Natural killer cell (primary cell): ENCODE measurements at regions of chr12 and their contacts with region 1.

Region 1: DNA sequence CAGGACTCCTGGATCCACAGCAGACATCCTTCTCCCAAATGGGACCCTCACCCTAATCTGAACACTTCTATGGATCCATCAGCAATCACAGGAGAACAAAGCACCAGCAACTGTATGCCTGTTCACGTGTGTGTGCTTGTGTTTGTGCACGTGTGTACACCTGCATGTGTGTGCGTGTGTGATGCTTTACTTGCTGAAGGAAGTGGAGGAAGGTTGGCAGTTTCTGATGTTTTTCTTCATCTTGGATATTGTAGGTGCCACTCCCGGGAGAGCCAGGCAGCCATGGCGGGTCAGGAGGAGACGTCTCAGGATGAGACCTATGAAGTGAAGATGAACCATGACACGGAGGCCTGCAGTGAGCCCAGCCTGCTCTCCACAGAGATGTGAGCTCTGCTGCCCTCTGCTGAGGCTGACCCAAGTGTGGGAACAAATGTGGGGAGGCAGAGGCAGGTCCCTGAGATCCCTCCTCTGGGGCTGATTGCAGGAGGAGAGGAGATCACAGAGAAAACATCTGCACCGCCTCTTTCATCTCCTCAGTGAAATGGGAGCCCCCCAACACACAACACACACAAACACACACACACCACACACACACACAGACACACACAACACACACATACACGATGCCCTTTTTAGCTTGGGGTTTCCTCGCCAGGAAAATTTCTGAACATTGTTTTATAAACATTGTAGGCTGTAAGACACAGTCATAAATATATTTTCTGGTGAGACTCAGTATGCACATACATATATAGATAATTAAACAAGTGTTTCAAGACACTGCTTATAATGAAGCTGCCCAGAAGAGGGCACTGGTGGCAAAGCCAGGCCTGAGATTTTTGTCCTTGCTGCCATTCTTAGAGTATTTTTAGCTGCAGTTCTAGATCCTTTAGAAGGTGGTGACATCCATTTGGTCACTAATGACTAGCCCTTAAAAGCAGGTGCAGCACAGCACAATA is 112.2 kb upstream of the FKBP4 start:
- DNase-seq: peak; percentile 33 to 74
- ATAC-seq: peak; percentile 61 to 84 (median 78)
- H3K4me3 ChIP-seq: no peak overlapping the region
- H3K4me3 Mint-ChIP-seq: no peak overlapping the region
- H3K27ac ChIP-seq: no peak overlapping the region
- H3K27ac Mint-ChIP-seq: peak overlapping the region; percentile 84 to 85
- H3K4me1 ChIP-seq: no peaks in the 10 kb centered on the region
- H3K4me1 Mint-ChIP-seq: peaks cover 10 to 11% of the 10 kb centered on the region in 2 donors
- H3K27me3 ChIP-seq: no peaks in the 10 kb centered on the region
- H3K27me3 Mint-ChIP-seq: no peaks in the 10 kb centered on the region
- CTCF ChIP-seq: peak; percentile 72

Region 2: DNA sequence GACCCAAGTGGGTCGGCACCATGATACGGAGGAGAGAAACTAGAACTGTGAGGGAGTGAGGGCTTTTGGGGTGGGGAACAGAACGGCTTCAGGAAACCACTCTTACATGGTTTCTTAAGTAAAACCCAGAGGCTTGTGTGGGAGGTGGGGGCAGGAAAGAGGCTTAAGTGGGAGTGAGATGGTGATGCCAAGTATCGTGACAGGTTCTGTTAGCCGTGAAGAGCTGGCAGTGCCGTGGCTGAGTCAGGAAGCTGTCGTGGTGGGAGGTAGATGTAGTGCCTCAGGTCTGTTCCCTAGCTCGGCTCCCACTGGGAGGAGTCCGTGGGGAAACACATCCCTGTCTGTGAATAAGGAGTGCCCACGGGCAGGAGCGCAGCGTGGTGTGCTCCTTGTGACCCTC is 73.6 kb before region 1 on chr12:
- intact Hi-C with region 1: no loop called
- DNase-seq: no peak
- ATAC-seq: no peak
- H3K4me3 ChIP-seq: no peak overlapping the region
- H3K4me3 Mint-ChIP-seq: no peak overlapping the region
- H3K27ac ChIP-seq: no peak overlapping the region
- H3K27ac Mint-ChIP-seq: no peak overlapping the region
- H3K4me1 ChIP-seq: no peaks in the 10 kb centered on the region
- H3K4me1 Mint-ChIP-seq: peaks cover 0 to 9% of the 10 kb centered on the region in 2 donors
- H3K27me3 ChIP-seq: no peaks in the 10 kb centered on the region
- H3K27me3 Mint-ChIP-seq: peaks cover 16 to 23% of the 10 kb centered on the region in 2 donors
- CTCF ChIP-seq: no peak

Region 3: GRCh38 chr12:2783936-2784600 is 101.5 kb after region 1 on chr12:
- intact Hi-C with region 1: loop called (anchors 1 kb)
- DNase-seq: peak; percentile 27 to 76
- ATAC-seq: peak; percentile 86 to 95 (median 95)
- H3K4me3 ChIP-seq: no peak overlapping the region
- H3K4me3 Mint-ChIP-seq: peak overlapping the region; percentile 65
- H3K27ac ChIP-seq: no peak overlapping the region
- H3K27ac Mint-ChIP-seq: no peak overlapping the region
- H3K4me1 ChIP-seq: peaks cover 7% of the 10 kb centered on the region
- H3K4me1 Mint-ChIP-seq: peaks cover 7% of the 10 kb centered on the region in 2 donors
- H3K27me3 ChIP-seq: no peaks in the 10 kb centered on the region
- H3K27me3 Mint-ChIP-seq: peaks cover 22 to 26% of the 10 kb centered on the region in 2 donors
- CTCF ChIP-seq: peak; percentile 86

Region 4: GRCh38 chr12:2804393-2805142 is 122.0 kb after region 1 on chr12:
- intact Hi-C with region 1: no loop called
- DNase-seq: no peak
- ATAC-seq: no peak
- H3K4me3 ChIP-seq: no peak overlapping the region
- H3K4me3 Mint-ChIP-seq: no peak overlapping the region
- H3K27ac ChIP-seq: no peak overlapping the region
- H3K27ac Mint-ChIP-seq: no peak overlapping the region
- H3K4me1 ChIP-seq: no peaks in the 10 kb centered on the region
- H3K4me1 Mint-ChIP-seq: no peaks in the 10 kb centered on the region
- H3K27me3 ChIP-seq: no peaks in the 10 kb centered on the region
- H3K27me3 Mint-ChIP-seq: no peaks in the 10 kb centered on the region
- CTCF ChIP-seq: no peak

Region 5: GRCh38 chr12:3041558-3042164 is 359.1 kb after region 1 on chr12:
- intact Hi-C with region 1: loop called (anchors 5 kb)
- DNase-seq: peak in 1 of 2 donors; percentile 65
- ATAC-seq: peak in 2 of 3 donors; percentile 69 to 82
- H3K4me3 ChIP-seq: no peak overlapping the region
- H3K4me3 Mint-ChIP-seq: no peak overlapping the region
- H3K27ac ChIP-seq: no peak overlapping the region
- H3K27ac Mint-ChIP-seq: no peak overlapping the region
- H3K4me1 ChIP-seq: peaks cover 3% of the 10 kb centered on the region
- H3K4me1 Mint-ChIP-seq: no peaks in the 10 kb centered on the region
- H3K27me3 ChIP-seq: no peaks in the 10 kb centered on the region
- H3K27me3 Mint-ChIP-seq: peaks cover 0 to 14% of the 10 kb centered on the region in 2 donors
- CTCF ChIP-seq: peak; percentile 59